CD8-positive, alpha-beta memory T cell (primary cell): ENCODE measurements at regions of chr12 and their contacts with region 1.

Region 1: GRCh38 chr12:112012775-112013600 is at the starts of genes ERP29 and TMEM116:
- DNase-seq: peak; percentile 98 to 100 (median 100)
- H3K4me3 ChIP-seq: peak within 1 kb of the TSS; percentile 90
- H3K4me3 Mint-ChIP-seq: peak within 1 kb of the TSS; percentile 83 to 98 (median 93)
- H3K27ac ChIP-seq: peak within 1 kb of the TSS; percentile 93
- H3K27ac Mint-ChIP-seq: peak within 1 kb of the TSS; percentile 96 to 100 (median 98)
- H3K4me1 ChIP-seq: peaks cover 53% of the 10 kb centered on the region
- H3K4me1 Mint-ChIP-seq: peaks cover 54 to 72% (median 66%) of the 10 kb centered on the region in 3 donors
- H3K27me3 ChIP-seq: no peaks in the 10 kb centered on the region
- H3K27me3 Mint-ChIP-seq: no peaks in the 10 kb centered on the region
- total RNA-seq, gene ERP29: 87.4 to 88.0 TPM
- total RNA-seq, gene TMEM116: 13.1 to 13.7 TPM

Region 2: DNA sequence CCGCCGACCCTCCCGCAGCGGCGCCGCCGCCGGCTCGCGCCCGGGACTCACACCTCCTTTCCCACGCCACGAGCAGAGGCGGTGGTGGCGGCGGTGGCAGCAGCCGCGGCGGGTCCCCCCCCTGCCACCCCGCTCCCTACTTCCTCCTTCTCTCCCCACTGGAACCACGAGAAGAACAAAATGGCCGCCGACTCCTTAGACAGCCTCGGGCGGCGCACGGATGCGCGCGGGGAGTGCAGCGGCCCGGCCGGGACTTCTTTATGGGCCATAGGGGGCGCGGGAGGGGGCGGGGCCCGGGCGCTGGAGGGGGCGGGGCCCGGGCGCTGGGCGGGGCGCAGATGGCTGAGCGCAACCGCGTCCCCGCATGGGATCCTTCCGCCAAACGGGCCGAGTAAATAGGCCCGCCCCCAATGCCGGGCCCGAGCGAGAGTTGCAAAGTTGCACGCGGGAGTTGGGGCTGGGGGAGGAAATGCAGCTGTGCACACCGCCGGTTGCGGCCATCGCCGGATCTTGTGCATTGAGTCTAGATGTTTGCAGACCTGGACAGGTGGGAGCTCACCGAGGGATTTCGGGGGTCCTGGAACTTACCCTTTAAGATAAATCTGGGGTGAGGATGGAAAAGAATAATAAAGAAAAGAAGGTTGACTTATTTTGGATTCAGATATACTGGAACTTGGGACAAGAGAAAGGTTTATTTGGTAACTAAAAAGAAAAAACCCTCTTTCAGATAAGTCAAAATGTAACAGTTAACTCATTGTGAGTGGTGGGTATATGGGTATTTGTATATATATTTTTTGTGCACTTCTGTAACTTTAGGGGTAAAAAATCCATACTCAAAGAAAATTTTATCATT is 1270.0 kb before region 1 on chr12 and contains the start of gene PPP1CC:
- CTCF ChIA-PET with region 1: no interaction called
- POLR2A ChIA-PET with region 1: no interaction called
- DNase-seq: peak; percentile 89 to 95 (median 92)
- H3K4me3 ChIP-seq: peak within 1 kb of the TSS; percentile 72
- H3K4me3 Mint-ChIP-seq: peak within 1 kb of the TSS; percentile 99 to 100 (median 100)
- H3K27ac ChIP-seq: peak within 1 kb of the TSS; percentile 73
- H3K27ac Mint-ChIP-seq: peak within 1 kb of the TSS; percentile 96 to 100 (median 99)
- H3K4me1 ChIP-seq: peaks cover 30% of the 10 kb centered on the region
- H3K4me1 Mint-ChIP-seq: peaks cover 34 to 50% (median 47%) of the 10 kb centered on the region in 3 donors
- H3K27me3 ChIP-seq: no peaks in the 10 kb centered on the region
- H3K27me3 Mint-ChIP-seq: peaks cover 0 to 6% of the 10 kb centered on the region in 2 donors
- total RNA-seq, gene PPP1CC: 242 to 249 TPM

Region 3: DNA sequence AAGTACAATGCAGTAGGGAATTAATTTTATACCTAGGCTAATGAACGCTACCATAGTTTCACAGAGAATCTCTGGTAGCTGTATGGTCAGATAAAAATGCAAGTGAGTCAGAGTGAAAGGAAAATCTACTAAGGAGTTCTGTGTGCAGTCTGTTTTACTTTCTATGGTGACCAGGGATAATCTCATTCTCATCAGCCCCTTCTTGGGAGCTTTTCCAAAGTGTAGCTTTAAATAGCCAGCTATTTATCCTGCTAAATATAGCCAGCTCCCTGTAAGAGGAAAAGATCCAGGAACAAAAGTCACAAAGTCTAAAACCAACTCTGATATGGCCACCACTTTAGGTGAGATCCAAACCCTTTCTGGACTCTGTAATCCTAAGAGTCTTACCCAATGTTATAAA is 75.6 kb before region 1 on chr12:
- CTCF ChIA-PET with region 1: interaction called, 71 read pairs
- POLR2A ChIA-PET with region 1: no interaction called
- DNase-seq: no peak
- H3K4me3 ChIP-seq: no peak overlapping the region
- H3K4me3 Mint-ChIP-seq: no peak overlapping the region
- H3K27ac ChIP-seq: no peak overlapping the region
- H3K27ac Mint-ChIP-seq: peak overlapping the region in 1 of 8 donors; percentile 66
- H3K4me1 ChIP-seq: no peaks in the 10 kb centered on the region
- H3K4me1 Mint-ChIP-seq: peaks cover 0 to 1% (median 0%) of the 10 kb centered on the region in 3 donors
- H3K27me3 ChIP-seq: no peaks in the 10 kb centered on the region
- H3K27me3 Mint-ChIP-seq: no peaks in the 10 kb centered on the region

Region 4: GRCh38 chr12:111942557-111942956 is 70.4 kb before region 1 on chr12:
- CTCF ChIA-PET with region 1: interaction called, 71 read pairs
- POLR2A ChIA-PET with region 1: interaction called, 60 read pairs
- DNase-seq: no peak
- H3K4me3 ChIP-seq: no peak overlapping the region
- H3K4me3 Mint-ChIP-seq: no peak overlapping the region
- H3K27ac ChIP-seq: no peak overlapping the region
- H3K27ac Mint-ChIP-seq: peak overlapping the region in 2 of 8 donors; percentile 1 to 88
- H3K4me1 ChIP-seq: peaks cover 16% of the 10 kb centered on the region
- H3K4me1 Mint-ChIP-seq: peaks cover 11 to 17% (median 15%) of the 10 kb centered on the region in 3 donors
- H3K27me3 ChIP-seq: no peaks in the 10 kb centered on the region
- H3K27me3 Mint-ChIP-seq: no peaks in the 10 kb centered on the region

Region 5: DNA sequence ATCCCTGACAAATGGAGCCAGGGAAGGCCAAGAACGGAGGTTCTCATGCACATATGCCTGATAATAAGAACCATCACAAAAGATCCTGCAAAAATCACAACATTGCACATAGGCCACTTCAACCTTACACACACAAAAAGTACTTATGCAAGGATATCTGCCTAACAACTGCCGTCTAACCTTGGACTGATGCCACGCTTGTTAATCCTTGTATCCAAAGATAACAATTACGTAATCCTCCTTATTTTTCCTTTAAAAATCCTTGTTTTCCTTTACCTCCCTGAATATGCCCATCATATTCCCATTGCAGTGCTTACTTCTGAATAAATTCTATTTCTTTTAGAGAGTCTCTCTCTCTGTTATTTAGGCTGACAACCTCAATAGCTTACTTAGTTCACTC is 59.5 kb before region 1 on chr12:
- CTCF ChIA-PET with region 1: interaction called, 11 read pairs
- POLR2A ChIA-PET with region 1: interaction called, 7 read pairs
- DNase-seq: no peak
- H3K4me3 ChIP-seq: no peak overlapping the region
- H3K4me3 Mint-ChIP-seq: no peak overlapping the region
- H3K27ac ChIP-seq: no peak overlapping the region
- H3K27ac Mint-ChIP-seq: peak overlapping the region in 1 of 8 donors; percentile 79
- H3K4me1 ChIP-seq: peaks cover 12% of the 10 kb centered on the region
- H3K4me1 Mint-ChIP-seq: peaks cover 35 to 54% (median 43%) of the 10 kb centered on the region in 3 donors
- H3K27me3 ChIP-seq: no peaks in the 10 kb centered on the region
- H3K27me3 Mint-ChIP-seq: no peaks in the 10 kb centered on the region

Region 6: GRCh38 chr12:111993292-111994150 is 19.5 kb before region 1 on chr12:
- CTCF ChIA-PET with region 1: interaction called, 129 read pairs
- POLR2A ChIA-PET with region 1: interaction called, 68 read pairs
- DNase-seq: peak in 3 of 5 donors; percentile 55 to 74 (median 63)
- H3K4me3 ChIP-seq: peak overlapping the region; percentile 56
- H3K4me3 Mint-ChIP-seq: peak overlapping the region; percentile 88 to 98 (median 95)
- H3K27ac ChIP-seq: peak overlapping the region; percentile 48
- H3K27ac Mint-ChIP-seq: peak overlapping the region; percentile 68 to 98 (median 92)
- H3K4me1 ChIP-seq: peaks cover 61% of the 10 kb centered on the region
- H3K4me1 Mint-ChIP-seq: peaks cover 71 to 85% (median 84%) of the 10 kb centered on the region in 3 donors
- H3K27me3 ChIP-seq: no peaks in the 10 kb centered on the region
- H3K27me3 Mint-ChIP-seq: peaks cover 0 to 1% of the 10 kb centered on the region in 2 donors

Region 7: GRCh38 chr12:112025808-112026375 is 12.9 kb after region 1 on chr12:
- CTCF ChIA-PET with region 1: interaction called, 5 read pairs
- POLR2A ChIA-PET with region 1: interaction called, 10 read pairs
- DNase-seq: no peak
- H3K4me3 ChIP-seq: no peak overlapping the region
- H3K4me3 Mint-ChIP-seq: no peak overlapping the region
- H3K27ac ChIP-seq: no peak overlapping the region
- H3K27ac Mint-ChIP-seq: peak overlapping the region in 6 of 8 donors; percentile 45 to 87 (median 50)
- H3K4me1 ChIP-seq: peaks cover 9% of the 10 kb centered on the region
- H3K4me1 Mint-ChIP-seq: peaks cover 22 to 43% (median 28%) of the 10 kb centered on the region in 3 donors
- H3K27me3 ChIP-seq: no peaks in the 10 kb centered on the region
- H3K27me3 Mint-ChIP-seq: no peaks in the 10 kb centered on the region

Region 8: DNA sequence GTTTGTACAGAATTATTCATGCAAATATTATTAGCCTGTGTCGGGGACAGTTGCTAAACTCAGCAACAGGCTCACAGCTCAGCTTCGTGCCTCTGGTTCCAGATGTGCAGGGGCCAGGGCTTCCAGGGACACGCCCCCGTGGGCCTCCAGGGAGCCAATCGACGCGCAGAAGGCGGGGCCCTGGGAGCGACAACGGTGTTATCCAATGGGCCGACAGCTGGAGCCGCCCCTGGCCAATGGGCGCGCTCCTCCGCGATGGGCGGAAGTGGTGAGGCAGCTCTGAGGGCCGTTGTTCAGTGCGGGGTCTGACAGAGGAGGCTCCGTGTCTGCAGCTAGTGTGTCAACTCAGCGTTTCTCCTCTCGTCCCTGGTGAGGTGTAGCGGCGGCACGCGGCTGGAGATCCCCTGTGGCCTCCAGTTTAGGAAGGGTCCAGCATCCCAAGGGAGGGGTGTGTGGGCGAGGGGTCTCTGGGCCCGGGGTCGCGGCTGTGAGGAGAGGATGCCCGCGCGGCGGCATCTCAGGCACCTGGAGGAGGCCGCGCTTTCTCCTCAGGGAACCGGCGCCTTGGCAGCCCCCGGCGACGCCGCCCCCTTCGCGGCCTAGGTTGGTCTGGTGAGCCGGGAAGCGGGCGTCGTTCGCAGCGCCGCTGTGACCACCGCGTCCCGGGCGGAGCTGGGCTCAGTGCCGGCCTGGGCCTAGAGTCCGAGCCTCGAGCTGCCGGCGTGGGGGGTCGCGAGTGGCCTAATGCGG is 112.4 kb after region 1 on chr12 and contains the start of gene TRAFD1:
- CTCF ChIA-PET with region 1: interaction called, 7 read pairs
- POLR2A ChIA-PET with region 1: interaction called, 10 read pairs
- DNase-seq: peak; percentile 97 to 99 (median 98)
- H3K4me3 ChIP-seq: peak within 1 kb of the TSS; percentile 88
- H3K4me3 Mint-ChIP-seq: peak within 1 kb of the TSS; percentile 75 to 94 (median 84)
- H3K27ac ChIP-seq: peak within 1 kb of the TSS; percentile 85
- H3K27ac Mint-ChIP-seq: peak within 1 kb of the TSS; percentile 65 to 97 (median 85)
- H3K4me1 ChIP-seq: peaks cover 45% of the 10 kb centered on the region
- H3K4me1 Mint-ChIP-seq: peaks cover 28 to 48% (median 47%) of the 10 kb centered on the region in 3 donors
- H3K27me3 ChIP-seq: no peaks in the 10 kb centered on the region
- H3K27me3 Mint-ChIP-seq: peaks cover 0 to 9% of the 10 kb centered on the region in 2 donors
- total RNA-seq, gene TRAFD1: 34.5 TPM

Region 9: DNA sequence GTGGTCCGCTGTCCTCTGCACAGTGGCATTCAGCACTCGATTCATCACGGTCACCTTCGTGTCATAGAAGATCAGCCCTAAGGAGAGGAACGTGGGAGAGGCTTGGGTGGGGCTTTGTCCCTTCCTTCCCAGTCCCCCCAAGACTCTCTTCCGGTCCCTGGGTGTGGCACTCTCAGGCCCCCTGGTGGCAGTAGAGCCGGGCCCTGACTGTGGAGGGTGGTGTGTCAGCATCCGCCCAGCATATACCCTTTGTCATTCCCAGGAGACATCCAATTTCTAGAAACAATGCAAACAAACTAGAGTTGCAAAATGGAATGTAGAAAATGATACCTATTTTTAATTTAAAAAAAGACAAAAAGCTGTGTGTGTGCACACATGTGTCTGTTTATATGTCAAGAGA is 157.4 kb after region 1 on chr12:
- CTCF ChIA-PET with region 1: no interaction called
- POLR2A ChIA-PET with region 1: no interaction called
- DNase-seq: peak in 3 of 5 donors; percentile 9 to 16 (median 12)
- H3K4me3 ChIP-seq: no peak overlapping the region
- H3K4me3 Mint-ChIP-seq: no peak overlapping the region
- H3K27ac ChIP-seq: no peak overlapping the region
- H3K27ac Mint-ChIP-seq: peak overlapping the region in 4 of 8 donors; percentile 45 to 92 (median 60)
- H3K4me1 ChIP-seq: no peaks in the 10 kb centered on the region
- H3K4me1 Mint-ChIP-seq: peaks cover 7 to 15% (median 7%) of the 10 kb centered on the region in 3 donors
- H3K27me3 ChIP-seq: no peaks in the 10 kb centered on the region
- H3K27me3 Mint-ChIP-seq: no peaks in the 10 kb centered on the region